Activated CD4-positive, alpha-beta memory T cell treated with anti-CD3 and anti-CD28 coated beads for 36 hours (primary cell): ENCODE measurements at regions of chr11 and their contacts with region 1.

Region 1: GRCh38 chr11:83007909-83008580 is 63.7 kb downstream of the RAB30 start:
- DNase-seq: no peak
- H3K4me3 Mint-ChIP-seq: no peak overlapping the region
- H3K27ac Mint-ChIP-seq: no peak overlapping the region
- H3K4me1 Mint-ChIP-seq: peaks cover 34% of the 10 kb centered on the region
- H3K27me3 Mint-ChIP-seq: no peaks in the 10 kb centered on the region

Region 2: GRCh38 chr11:82003671-82004515 is 1004.2 kb before region 1 on chr11:
- CTCF ChIA-PET with region 1: no interaction called
- POLR2A ChIA-PET with region 1: no interaction called
- intact Hi-C with region 1: loop called (anchors 10 kb)
- DNase-seq: peak; percentile 26
- H3K4me3 Mint-ChIP-seq: no peak overlapping the region
- H3K27ac Mint-ChIP-seq: peak overlapping the region; percentile 73
- H3K4me1 Mint-ChIP-seq: peaks cover 20% of the 10 kb centered on the region
- H3K27me3 Mint-ChIP-seq: no peaks in the 10 kb centered on the region

Region 3: DNA sequence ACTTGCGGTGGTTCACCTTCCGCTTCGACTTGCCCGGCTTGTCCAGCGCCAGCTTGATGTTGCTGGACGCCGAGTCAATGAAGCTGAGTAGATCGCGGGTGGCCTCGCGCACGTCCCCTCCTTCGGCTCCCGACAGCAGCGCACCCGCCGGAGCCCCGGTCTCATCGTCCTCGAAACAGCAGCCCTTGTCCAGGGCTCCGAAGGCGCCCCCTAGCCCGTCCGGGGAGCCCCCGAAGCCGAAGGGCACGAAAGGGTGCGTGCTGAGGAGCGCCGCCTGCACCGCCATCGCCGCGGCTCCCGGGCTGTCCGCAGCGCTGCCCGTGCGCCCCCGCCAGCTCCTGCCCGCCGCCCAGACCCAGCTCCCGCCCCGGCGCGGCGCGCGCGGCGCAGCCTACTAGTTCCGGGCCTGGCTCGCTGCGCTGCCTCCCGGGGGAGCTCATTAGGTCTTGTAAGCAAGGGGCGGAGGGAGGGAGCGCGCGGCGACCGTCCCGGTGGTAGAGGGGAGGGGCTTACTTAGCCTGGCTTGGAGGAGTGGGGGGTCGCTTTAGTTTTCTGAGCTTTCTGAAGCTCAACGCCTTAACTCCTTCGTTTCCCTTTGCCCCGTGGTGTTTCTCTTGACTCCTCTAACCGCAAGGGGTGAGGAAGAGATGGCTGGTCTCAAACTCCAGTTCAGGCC is 274.5 kb before region 1 on chr11 and contains the start of gene FAM181B:
- CTCF ChIA-PET with region 1: no interaction called
- POLR2A ChIA-PET with region 1: no interaction called
- intact Hi-C with region 1: no loop called
- DNase-seq: peak; percentile 46
- H3K4me3 Mint-ChIP-seq: peak within 1 kb of the TSS; percentile 61
- H3K27ac Mint-ChIP-seq: no peak within 1 kb of the TSS
- H3K4me1 Mint-ChIP-seq: peaks cover 2% of the 10 kb centered on the region
- H3K27me3 Mint-ChIP-seq: peaks cover 39% of the 10 kb centered on the region
- total RNA-seq, gene FAM181B: 0.05 TPM in 1 of 2 experiments, not detected in the other

Region 4: DNA sequence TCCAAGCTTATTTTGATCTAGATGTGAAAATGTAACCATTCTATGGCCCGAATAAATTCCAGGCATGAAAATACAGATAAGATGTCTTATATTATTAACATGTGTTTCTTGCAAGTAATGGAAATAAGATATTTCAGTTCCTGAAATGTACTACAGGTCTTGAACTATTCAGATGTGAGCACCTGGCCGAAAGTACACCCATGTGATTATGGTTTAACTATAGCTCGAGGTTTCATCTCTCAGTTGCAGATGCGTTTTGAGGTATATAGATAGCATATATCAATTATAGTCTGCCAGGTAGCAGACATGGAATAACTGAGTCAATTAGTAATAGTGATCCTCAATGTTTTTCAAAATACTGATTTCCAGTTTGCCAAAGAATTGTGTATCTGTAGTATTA is 38.2 kb before region 1 on chr11:
- CTCF ChIA-PET with region 1: no interaction called
- POLR2A ChIA-PET with region 1: interaction called, 5 read pairs
- intact Hi-C with region 1: loop called (anchors 2 kb)
- DNase-seq: no peak
- H3K4me3 Mint-ChIP-seq: no peak overlapping the region
- H3K27ac Mint-ChIP-seq: no peak overlapping the region
- H3K4me1 Mint-ChIP-seq: peaks cover 38% of the 10 kb centered on the region
- H3K27me3 Mint-ChIP-seq: no peaks in the 10 kb centered on the region

Region 5: GRCh38 chr11:82996966-82997606 is 11.0 kb before region 1 on chr11:
- CTCF ChIA-PET with region 1: interaction called, 6 read pairs
- POLR2A ChIA-PET with region 1: interaction called, 17 read pairs
- intact Hi-C with region 1: loop called (anchors 1 kb)
- DNase-seq: peak; percentile 67
- H3K4me3 Mint-ChIP-seq: no peak overlapping the region
- H3K27ac Mint-ChIP-seq: peak overlapping the region; percentile 43
- H3K4me1 Mint-ChIP-seq: peaks cover 60% of the 10 kb centered on the region
- H3K27me3 Mint-ChIP-seq: no peaks in the 10 kb centered on the region

Region 6: GRCh38 chr11:83044958-83045712 is 37.1 kb after region 1 on chr11:
- CTCF ChIA-PET with region 1: no interaction called
- POLR2A ChIA-PET with region 1: no interaction called
- intact Hi-C with region 1: no loop called
- DNase-seq: no peak
- H3K4me3 Mint-ChIP-seq: no peak overlapping the region
- H3K27ac Mint-ChIP-seq: no peak overlapping the region
- H3K4me1 Mint-ChIP-seq: peaks cover 15% of the 10 kb centered on the region
- H3K27me3 Mint-ChIP-seq: no peaks in the 10 kb centered on the region

Region 7: GRCh38 chr11:83071567-83072349 is 63.7 kb after region 1 on chr11 and contains the start of gene RAB30:
- CTCF ChIA-PET with region 1: no interaction called
- POLR2A ChIA-PET with region 1: interaction called, 13 read pairs
- intact Hi-C with region 1: loop called (anchors 1 kb)
- DNase-seq: peak; percentile 96
- H3K4me3 Mint-ChIP-seq: no peak within 1 kb of the TSS
- H3K27ac Mint-ChIP-seq: no peak within 1 kb of the TSS
- H3K4me1 Mint-ChIP-seq: peaks cover 29% of the 10 kb centered on the region
- H3K27me3 Mint-ChIP-seq: no peaks in the 10 kb centered on the region
- total RNA-seq, gene RAB30: 11.5 to 12.9 TPM

Region 8: GRCh38 chr11:83193315-83194280 is 185.6 kb after region 1 on chr11 and contains the start of gene ANKRD42:
- CTCF ChIA-PET with region 1: no interaction called
- POLR2A ChIA-PET with region 1: no interaction called
- intact Hi-C with region 1: loop called (anchors 2 kb)
- DNase-seq: peak; percentile 93
- H3K4me3 Mint-ChIP-seq: peak within 1 kb of the TSS; percentile 99
- H3K27ac Mint-ChIP-seq: peak within 1 kb of the TSS; percentile 98
- H3K4me1 Mint-ChIP-seq: peaks cover 38% of the 10 kb centered on the region
- H3K27me3 Mint-ChIP-seq: no peaks in the 10 kb centered on the region
- total RNA-seq, gene ANKRD42: 3.8 to 5.4 TPM